Spleen (tissue), 13 donors: ENCODE measurements at regions of chr18 and their contacts with region 1.

Region 1: GRCh38 chr18:3869848-3870247 is 419.9 kb downstream of the TGIF1 start:
- DNase-seq: no peak
- H3K4me3 ChIP-seq: no peak overlapping the region
- H3K27ac ChIP-seq: no peak overlapping the region
- H3K4me1 ChIP-seq: peaks cover 0 to 7% (median 0%) of the 10 kb centered on the region in 6 donors
- H3K27me3 ChIP-seq: peaks cover 0 to 9% (median 0%) of the 10 kb centered on the region in 7 donors
- CTCF ChIP-seq: peak in 6 of 11 experiments; percentile 26 to 53 (median 37)
- POLR2A ChIP-seq: no peak

Region 2: DNA sequence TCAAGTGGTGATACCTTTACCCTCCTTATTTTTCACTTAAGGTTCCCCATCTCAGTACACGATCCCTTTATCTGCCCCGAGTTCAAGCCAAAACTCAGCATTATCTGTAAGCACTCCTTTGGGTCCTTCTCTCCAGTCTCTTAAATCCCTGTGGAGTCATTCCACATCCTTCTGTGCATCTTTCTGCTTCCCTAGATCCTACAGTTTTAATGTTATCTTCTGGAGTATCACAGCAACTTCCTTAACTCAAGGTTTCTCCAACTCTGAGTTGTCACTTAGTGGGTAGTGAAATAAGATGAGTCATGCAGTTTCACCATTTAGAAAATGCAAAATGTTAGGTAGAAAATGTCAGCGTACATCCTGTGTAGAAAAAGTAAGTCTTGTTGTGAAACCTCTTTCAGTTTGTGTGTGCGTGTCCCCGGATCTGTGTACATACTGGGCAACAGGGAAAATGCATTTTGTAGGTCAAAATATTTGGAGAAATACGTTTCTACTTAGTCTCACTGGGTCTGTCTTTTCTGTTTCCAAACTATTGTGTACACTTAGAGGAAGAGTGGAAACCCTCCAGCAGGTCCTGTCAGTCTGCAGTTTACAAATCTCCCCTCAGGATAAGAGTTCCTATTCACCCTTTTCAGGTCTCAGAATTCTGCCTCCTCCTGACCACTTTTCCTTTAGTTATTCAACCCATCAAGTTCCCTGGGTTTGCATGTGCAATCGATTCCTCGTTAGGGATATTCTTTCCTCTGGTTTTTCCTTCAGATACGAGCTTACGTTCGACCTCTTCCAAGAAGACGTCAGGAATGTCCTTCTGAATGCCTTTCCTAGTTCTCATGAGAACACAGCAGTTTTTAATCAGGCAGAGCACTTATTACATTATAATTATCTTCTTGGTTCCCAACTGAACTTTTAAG is 265.1 kb before region 1 on chr18:
- intact Hi-C with region 1: no loop called
- DNase-seq: peak; percentile 35
- H3K4me3 ChIP-seq: peak overlapping the region in 7 of 8 donors; percentile 11 to 65 (median 30)
- H3K27ac ChIP-seq: peak overlapping the region; percentile 44 to 94 (median 90)
- H3K4me1 ChIP-seq: peaks cover 31 to 61% (median 49%) of the 10 kb centered on the region in 6 donors
- H3K27me3 ChIP-seq: no peaks in the 10 kb centered on the region
- CTCF ChIP-seq: peak in 2 of 11 experiments; percentile 7 to 8
- POLR2A ChIP-seq: no peak

Region 3: DNA sequence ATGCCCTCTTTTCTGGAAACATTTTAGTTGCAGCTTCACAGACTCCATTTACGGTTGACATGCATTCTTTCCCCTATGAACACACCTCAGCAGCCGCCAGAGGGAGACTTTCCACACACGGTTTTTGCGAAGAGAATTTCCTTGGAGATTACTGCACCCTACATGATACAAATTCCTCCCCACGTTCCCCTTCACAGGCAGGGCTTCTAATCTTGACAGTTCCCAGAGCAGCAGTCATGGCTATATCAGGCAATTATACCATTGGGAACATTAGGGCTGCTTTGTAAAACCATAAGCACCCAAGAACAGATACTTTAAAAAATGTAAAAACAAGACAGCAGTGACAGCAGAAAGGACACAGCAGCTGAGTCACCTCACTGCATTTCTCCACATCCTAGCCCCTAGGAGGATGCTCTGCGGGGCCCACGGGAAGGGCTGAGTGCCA is 166.1 kb before region 1 on chr18:
- intact Hi-C with region 1: loop called (anchors 10 kb)
- DNase-seq: no peak
- H3K4me3 ChIP-seq: no peak overlapping the region
- H3K27ac ChIP-seq: no peak overlapping the region
- H3K4me1 ChIP-seq: peaks cover 0 to 22% (median 6%) of the 10 kb centered on the region in 6 donors
- H3K27me3 ChIP-seq: peaks cover 0 to 51% (median 0%) of the 10 kb centered on the region in 7 donors
- CTCF ChIP-seq: peak in 9 of 11 experiments; percentile 29 to 68 (median 57)
- POLR2A ChIP-seq: no peak

Region 4: GRCh38 chr18:3914833-3915610 is 45.2 kb after region 1 on chr18:
- intact Hi-C with region 1: no loop called
- DNase-seq: no peak
- H3K4me3 ChIP-seq: no peak overlapping the region
- H3K27ac ChIP-seq: no peak overlapping the region
- H3K4me1 ChIP-seq: no peaks in the 10 kb centered on the region
- H3K27me3 ChIP-seq: peaks cover 0 to 9% (median 0%) of the 10 kb centered on the region in 7 donors
- CTCF ChIP-seq: no peak
- POLR2A ChIP-seq: no peak